ENCODE measurements at regions of chr10 and their contacts with region 1.

Region 1: DNA sequence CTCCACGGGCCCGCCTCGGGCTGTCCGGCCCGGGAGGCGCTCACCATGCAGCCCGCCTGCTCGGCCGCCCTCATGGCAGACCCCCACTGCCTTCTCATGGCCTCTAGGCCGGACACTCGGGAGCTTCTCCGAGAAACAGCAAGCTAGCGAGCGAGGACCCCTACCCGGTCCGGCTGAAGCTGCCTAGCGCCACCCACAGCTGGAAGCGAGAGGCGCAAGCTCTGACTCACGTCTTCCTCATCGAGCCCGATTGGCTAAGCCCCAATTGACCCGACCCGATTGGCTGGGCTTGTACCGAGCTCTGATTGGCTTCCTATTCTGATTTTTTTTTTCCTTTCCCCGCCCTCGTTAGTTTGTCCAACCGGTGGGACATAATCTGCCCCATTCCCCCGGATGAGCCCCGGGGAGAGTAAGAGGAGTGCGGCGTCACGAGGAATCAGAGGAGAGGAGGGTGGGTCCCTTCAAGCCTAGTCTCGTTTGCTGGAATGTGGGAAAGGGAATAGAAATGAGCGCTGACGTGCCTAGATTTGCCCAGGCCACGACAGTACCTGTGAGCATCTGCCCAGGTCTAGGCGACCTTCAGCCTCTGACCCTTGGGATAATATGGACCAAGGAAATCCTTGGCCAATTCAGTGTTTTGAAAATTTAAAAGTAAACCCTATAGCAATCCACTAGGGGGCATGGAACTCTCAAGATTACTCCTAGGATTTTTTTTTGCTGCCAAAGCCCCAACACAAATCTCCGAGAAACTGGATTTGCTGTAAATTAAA is at the start of gene TYSND1:
- DNase-seq: peak; percentile 84 to 97 (median 90)
- ATAC-seq: peak; percentile 82
- H3K4me3 ChIP-seq: peak within 1 kb of the TSS; percentile 82
- H3K4me3 Mint-ChIP-seq: peak within 1 kb of the TSS; percentile 92
- H3K27ac ChIP-seq: peak within 1 kb of the TSS; percentile 76 to 87
- H3K27ac Mint-ChIP-seq: peak within 1 kb of the TSS; percentile 91
- H3K4me1 ChIP-seq: peaks cover 32% of the 10 kb centered on the region
- H3K4me1 Mint-ChIP-seq: peaks cover 45% of the 10 kb centered on the region
- H3K27me3 ChIP-seq: no peaks in the 10 kb centered on the region
- H3K27me3 Mint-ChIP-seq: no peaks in the 10 kb centered on the region
- CTCF ChIP-seq: peak; percentile 78
- total RNA-seq, gene TYSND1: 12.6 to 13.0 TPM

Region 2: DNA sequence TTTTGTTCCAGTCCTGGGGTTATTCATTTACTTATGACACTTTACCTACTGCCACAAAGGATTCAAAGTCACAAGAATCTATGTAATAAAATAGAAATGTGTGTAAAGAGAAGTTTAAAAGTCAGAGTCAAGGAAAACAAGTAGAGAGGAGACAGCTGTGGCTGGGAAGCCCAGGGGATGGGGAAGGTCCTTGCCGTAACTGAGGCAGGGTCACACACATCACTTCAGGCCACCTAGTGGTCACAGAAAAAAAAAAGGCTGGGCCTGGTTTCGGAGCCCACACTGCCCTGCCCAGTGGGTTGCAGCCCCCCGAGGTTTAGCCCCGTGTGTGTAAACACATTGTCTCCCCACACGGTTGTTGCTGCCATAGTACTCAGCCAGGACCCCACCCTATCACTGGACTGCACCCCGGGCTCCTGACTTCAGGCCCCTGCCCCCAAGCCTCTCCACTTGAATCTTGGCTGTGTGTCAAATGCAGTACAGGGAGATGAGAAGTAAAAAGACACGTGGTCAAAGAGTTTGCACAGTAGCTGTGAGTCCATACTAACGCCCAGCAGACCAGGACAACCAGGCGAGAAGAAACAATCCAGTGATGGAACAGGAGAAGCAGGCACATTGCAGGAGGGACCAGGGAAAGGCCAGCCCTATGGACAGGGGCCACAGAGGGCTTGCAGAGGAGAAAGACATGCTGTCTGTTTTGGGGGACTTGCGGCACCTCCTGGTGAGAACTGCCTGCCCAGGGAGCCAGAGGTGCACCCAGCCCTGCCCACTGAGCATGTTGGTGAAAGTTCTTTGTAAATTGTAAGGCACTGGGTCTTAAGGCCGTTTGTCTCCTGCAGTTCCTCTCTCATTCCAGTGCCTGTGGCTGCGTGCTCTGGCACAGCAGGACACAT is 185.4 kb before region 1 on chr10:
- CTCF ChIA-PET with region 1: no interaction called
- POLR2A ChIA-PET with region 1: no interaction called
- intact Hi-C with region 1: loop called in 1 of 2 experiments (anchors 10 kb)
- DNase-seq: no peak
- ATAC-seq: no peak
- H3K4me3 ChIP-seq: no peak overlapping the region
- H3K4me3 Mint-ChIP-seq: no peak overlapping the region
- H3K27ac ChIP-seq: no peak overlapping the region
- H3K27ac Mint-ChIP-seq: no peak overlapping the region
- H3K4me1 ChIP-seq: no peaks in the 10 kb centered on the region
- H3K4me1 Mint-ChIP-seq: no peaks in the 10 kb centered on the region
- H3K27me3 ChIP-seq: peaks cover 0 to 12% of the 10 kb centered on the region in 2 experiments
- H3K27me3 Mint-ChIP-seq: peaks cover 32% of the 10 kb centered on the region
- CTCF ChIP-seq: no peak

Region 3: DNA sequence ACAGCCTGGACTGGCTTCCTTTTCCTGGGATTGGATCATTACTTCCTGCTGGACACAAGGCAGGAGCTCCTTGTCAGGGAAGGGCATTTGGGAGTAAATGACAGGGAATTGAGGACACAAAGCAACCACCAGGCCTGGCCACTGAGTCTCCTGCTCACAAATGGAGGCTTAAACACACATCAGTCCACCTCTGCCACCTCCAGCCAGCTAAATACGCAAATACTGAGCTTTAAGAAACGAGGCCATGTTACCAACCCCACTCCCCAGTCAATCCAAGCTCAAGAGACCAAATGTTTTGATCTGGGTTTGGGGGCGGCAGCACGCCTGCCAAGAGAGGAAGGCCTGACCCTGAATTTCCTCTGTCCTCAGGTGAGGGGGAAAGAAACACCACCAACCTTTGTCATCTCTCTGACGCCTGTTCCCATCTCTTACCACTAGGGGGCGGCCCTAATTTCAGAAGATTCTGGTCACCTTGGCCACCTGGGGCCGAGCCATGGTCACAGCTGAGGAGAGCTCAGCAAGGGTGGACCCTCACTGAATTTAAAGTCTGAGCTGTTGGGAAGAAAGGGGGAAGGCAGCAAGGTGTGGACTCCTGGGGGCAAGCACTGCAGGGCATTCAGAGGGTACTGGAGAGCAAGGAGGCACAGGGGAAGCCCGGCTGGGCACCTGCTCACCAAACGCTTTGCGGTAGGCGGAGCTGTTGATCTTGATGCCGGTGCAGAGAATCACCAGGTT is 30.6 kb before region 1 on chr10:
- CTCF ChIA-PET with region 1: interaction called, 26 read pairs
- POLR2A ChIA-PET with region 1: interaction called, 23 read pairs
- intact Hi-C with region 1: loop called in 1 of 2 experiments (anchors 2 kb)
- DNase-seq: peak; percentile 26 to 76 (median 42)
- ATAC-seq: peak; percentile 88
- H3K4me3 ChIP-seq: no peak overlapping the region
- H3K4me3 Mint-ChIP-seq: no peak overlapping the region
- H3K27ac ChIP-seq: no peak overlapping the region
- H3K27ac Mint-ChIP-seq: no peak overlapping the region
- H3K4me1 ChIP-seq: peaks cover 9% of the 10 kb centered on the region
- H3K4me1 Mint-ChIP-seq: peaks cover 6% of the 10 kb centered on the region
- H3K27me3 ChIP-seq: no peaks in the 10 kb centered on the region
- H3K27me3 Mint-ChIP-seq: no peaks in the 10 kb centered on the region
- CTCF ChIP-seq: peak; percentile 90

Region 4: GRCh38 chr10:70169649-70170364 is 23.1 kb after region 1 on chr10:
- CTCF ChIA-PET with region 1: interaction called, 64 read pairs
- POLR2A ChIA-PET with region 1: interaction called, 138 read pairs
- intact Hi-C with region 1: loop called (anchors 1 kb)
- DNase-seq: peak in 3 of 14 experiments; percentile 24 to 50 (median 28)
- ATAC-seq: peak; percentile 21
- H3K4me3 ChIP-seq: peak overlapping the region; percentile 97
- H3K4me3 Mint-ChIP-seq: peak overlapping the region; percentile 98
- H3K27ac ChIP-seq: peak overlapping the region; percentile 75 to 93
- H3K27ac Mint-ChIP-seq: peak overlapping the region; percentile 94
- H3K4me1 ChIP-seq: peaks cover 60% of the 10 kb centered on the region
- H3K4me1 Mint-ChIP-seq: peaks cover 64% of the 10 kb centered on the region
- H3K27me3 ChIP-seq: no peaks in the 10 kb centered on the region
- H3K27me3 Mint-ChIP-seq: no peaks in the 10 kb centered on the region
- CTCF ChIP-seq: no peak

Region 5: DNA sequence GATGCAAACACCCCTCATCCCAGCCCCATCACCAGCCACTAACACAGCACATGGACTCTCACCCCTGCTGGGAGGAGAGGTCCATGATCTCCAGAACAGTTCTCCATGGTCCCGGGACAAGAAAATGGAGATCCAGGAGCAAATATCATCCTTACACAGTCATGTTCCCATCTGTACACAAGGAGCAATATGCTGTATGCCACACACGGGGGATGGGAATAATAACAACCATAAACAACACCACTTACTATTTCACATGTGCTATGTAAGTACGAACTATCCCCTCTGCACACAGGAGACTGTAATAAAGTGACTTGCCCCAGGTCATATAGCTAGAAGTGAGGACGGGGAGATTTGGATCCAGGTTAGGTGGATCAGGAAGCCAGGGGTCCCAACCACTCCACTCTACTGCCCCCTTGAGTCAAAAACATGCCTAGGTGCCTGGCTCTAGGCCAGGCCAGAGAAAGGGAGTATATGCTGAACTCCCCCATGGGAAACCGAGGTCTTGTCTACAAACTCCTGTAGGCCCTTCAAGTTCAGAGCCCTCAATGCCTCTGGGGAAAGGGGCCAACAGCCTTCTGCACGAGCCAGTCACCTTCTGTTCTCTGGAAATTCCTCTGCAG is 201.7 kb after region 1 on chr10:
- CTCF ChIA-PET with region 1: no interaction called
- POLR2A ChIA-PET with region 1: no interaction called
- intact Hi-C with region 1: no loop called
- DNase-seq: peak in 5 of 14 experiments; percentile 7 to 41 (median 29)
- ATAC-seq: no peak
- H3K4me3 ChIP-seq: no peak overlapping the region
- H3K4me3 Mint-ChIP-seq: no peak overlapping the region
- H3K27ac ChIP-seq: no peak overlapping the region
- H3K27ac Mint-ChIP-seq: no peak overlapping the region
- H3K4me1 ChIP-seq: no peaks in the 10 kb centered on the region
- H3K4me1 Mint-ChIP-seq: no peaks in the 10 kb centered on the region
- H3K27me3 ChIP-seq: no peaks in the 10 kb centered on the region
- H3K27me3 Mint-ChIP-seq: no peaks in the 10 kb centered on the region
- CTCF ChIP-seq: peak; percentile 24

Region 6: DNA sequence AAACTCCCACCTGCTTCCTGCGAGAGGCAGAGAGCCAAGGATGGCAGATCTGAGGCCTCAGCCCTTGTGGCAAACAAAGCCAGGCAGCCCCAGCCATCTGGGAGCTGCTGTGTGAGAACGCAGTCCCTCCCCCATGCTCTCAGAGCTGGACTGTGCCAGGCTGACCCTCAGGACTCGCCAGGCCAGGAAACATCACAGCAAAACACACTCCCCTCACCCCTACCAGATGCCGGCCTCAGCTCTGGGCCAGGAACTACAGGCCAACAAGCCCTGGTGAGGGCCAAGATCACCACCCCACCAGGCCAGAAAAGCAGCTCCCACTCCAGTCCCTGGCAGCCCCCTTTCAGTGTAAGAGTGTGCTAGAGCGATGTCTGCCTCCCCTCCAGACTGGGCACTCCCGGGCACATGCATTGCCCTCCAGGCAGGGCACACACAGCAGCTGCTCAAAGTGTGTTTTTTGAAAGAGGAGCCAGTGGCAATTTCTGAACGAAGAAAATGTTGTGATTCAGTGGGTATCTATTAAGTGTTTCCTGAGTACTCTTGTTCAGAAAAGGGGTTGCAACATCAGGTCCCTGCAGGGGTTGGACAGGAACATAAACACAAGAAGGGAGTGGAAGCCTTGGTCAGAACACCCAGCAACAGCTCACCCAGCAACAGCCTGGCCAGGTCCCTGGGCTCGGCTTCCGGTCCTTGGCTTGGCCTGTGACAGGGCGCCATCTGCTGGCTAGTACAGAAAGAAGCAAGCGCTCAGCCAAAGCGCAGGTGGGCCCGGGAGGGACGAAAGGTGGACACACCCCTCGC is 217.5 kb after region 1 on chr10:
- CTCF ChIA-PET with region 1: interaction called, 10 read pairs
- POLR2A ChIA-PET with region 1: interaction called, 10 read pairs
- intact Hi-C with region 1: loop called in 1 of 2 experiments (anchors 10 kb)
- DNase-seq: peak; percentile 72 to 91 (median 78)
- ATAC-seq: peak; percentile 98
- H3K4me3 ChIP-seq: no peak overlapping the region
- H3K4me3 Mint-ChIP-seq: no peak overlapping the region
- H3K27ac ChIP-seq: no peak overlapping the region
- H3K27ac Mint-ChIP-seq: no peak overlapping the region
- H3K4me1 ChIP-seq: peaks cover 13% of the 10 kb centered on the region
- H3K4me1 Mint-ChIP-seq: peaks cover 9% of the 10 kb centered on the region
- H3K27me3 ChIP-seq: no peaks in the 10 kb centered on the region
- H3K27me3 Mint-ChIP-seq: no peaks in the 10 kb centered on the region
- CTCF ChIP-seq: peak; percentile 89

Region 7: DNA sequence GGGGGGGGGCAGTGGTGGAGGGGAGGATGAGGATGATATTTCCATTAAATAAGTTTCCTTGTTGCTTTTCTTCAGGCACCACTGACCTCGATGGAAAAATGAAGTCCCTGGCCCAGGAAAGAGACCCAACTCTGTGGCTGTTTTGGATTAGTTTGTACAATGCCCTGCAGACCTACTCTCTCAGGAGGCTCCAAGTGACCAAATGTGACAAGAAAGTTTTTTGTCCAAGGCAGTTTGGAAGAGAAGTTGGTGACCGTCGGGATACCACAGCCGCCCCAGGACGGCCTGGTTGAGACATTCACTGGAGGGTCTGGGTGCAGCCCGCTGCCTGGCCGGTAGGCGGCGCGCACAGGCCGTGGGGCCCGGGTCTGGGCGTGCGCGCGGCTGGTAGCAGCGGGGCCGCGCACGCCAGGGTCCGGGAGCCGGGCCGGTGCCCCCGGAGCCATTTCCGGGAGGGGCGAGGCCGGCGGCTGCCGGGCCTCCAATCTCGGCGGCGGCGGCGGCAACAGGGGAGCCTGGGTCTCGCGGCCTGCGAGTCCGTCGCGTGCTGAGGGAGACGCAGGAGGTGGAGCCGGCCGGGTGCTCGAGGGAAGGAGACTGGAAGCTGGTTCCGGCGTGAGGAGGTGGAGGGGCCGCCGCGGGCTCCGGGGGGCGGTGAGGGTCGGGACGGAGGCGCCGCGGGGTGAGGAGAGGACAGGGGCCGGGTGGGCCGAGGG is 669.0 kb after region 1 on chr10 and contains the start of gene SGPL1:
- CTCF ChIA-PET with region 1: no interaction called
- POLR2A ChIA-PET with region 1: no interaction called
- intact Hi-C with region 1: loop called in 1 of 2 experiments (anchors 10 kb)
- DNase-seq: peak; percentile 64 to 92 (median 82)
- ATAC-seq: peak; percentile 89
- H3K4me3 ChIP-seq: peak within 1 kb of the TSS; percentile 79
- H3K4me3 Mint-ChIP-seq: peak within 1 kb of the TSS; percentile 90
- H3K27ac ChIP-seq: peak within 1 kb of the TSS in 1 of 2 donors; percentile 44
- H3K27ac Mint-ChIP-seq: peak within 1 kb of the TSS; percentile 80
- H3K4me1 ChIP-seq: peaks cover 25% of the 10 kb centered on the region
- H3K4me1 Mint-ChIP-seq: peaks cover 52% of the 10 kb centered on the region
- H3K27me3 ChIP-seq: no peaks in the 10 kb centered on the region
- H3K27me3 Mint-ChIP-seq: no peaks in the 10 kb centered on the region
- CTCF ChIP-seq: peak; percentile 88
- total RNA-seq, gene SGPL1: 15.1 to 16.9 TPM